HepG2 (cell line): ENCODE measurements at regions of chr11 and their contacts with region 1.

Region 1: GRCh38 chr11:124837491-124837856 is 27.8 kb upstream of the ROBO3 start:
- DNase-seq: peak; percentile 58
- ATAC-seq: peak; percentile 57
- H3K4me3 ChIP-seq: no peak overlapping the region
- H3K27ac ChIP-seq: no peak overlapping the region
- H3K4me1 ChIP-seq: peaks cover 32% of the 10 kb centered on the region
- H3K27me3 ChIP-seq: peaks cover 11 to 55% of the 10 kb centered on the region in 2 experiments
- CTCF ChIP-seq: peak; percentile 71
- EP300 ChIP-seq: no peak
- POLR2A ChIP-seq: no peak
- RAD21 ChIP-seq: no peak

Region 2: GRCh38 chr11:124644426-124645280 is 192.8 kb before region 1 on chr11:
- CTCF ChIA-PET with region 1: interaction called, 17 read pairs
- POLR2A ChIA-PET with region 1: interaction called, 5 read pairs
- in situ Hi-C with region 1: loop called (anchors 5 kb)
- intact Hi-C with region 1: loop called (anchors 1 kb)
- DNase-seq: peak; percentile 64
- ATAC-seq: peak; percentile 95
- H3K4me3 ChIP-seq: peak overlapping the region in 2 of 3 experiments; percentile 46 to 52; a peak in 2 of 6 replicates
- H3K27ac ChIP-seq: no peak overlapping the region
- H3K4me1 ChIP-seq: peaks cover 7% of the 10 kb centered on the region
- H3K27me3 ChIP-seq: no peaks in the 10 kb centered on the region
- CTCF ChIP-seq: peak; percentile 81
- EP300 ChIP-seq: no peak
- POLR2A ChIP-seq: no peak
- RAD21 ChIP-seq: peak; percentile 58; the same call in 1 of the 2 replicates

Region 3: DNA sequence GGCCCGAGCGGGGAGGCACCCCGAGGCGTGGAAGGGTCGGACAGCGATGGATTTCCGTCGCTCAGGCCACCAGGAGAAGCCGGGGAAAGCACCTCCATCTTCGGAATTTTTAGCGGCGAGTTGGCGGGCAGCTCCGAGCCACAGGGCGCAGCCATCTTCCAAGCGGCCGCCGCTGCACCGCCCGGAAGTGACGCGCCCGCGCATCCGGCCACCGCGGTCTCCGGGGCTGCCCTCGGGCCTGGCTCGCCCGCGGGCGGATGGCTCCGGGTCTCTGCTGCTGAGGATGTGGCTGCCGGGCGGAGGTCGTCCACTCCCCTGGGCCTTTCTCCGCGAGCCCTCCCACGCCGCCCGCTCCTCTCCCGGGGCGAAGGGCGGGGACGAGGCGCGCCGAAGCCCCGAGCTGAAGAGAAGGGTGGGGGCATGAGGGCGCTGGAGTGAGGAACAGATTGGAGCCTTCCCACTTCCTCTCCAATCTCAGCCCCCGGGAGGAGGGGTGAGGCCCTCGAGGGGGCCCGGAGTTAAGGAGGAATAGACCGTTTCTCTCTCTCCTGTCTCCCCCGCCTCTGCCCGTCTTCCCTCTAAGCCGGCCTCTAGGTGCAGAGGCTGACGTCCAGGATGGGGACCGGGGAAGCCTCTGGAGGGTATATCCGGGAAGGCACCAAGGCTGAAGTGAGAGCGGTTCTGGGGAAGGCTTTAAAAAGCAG is 37.1 kb before region 1 on chr11 and contains the start of gene MSANTD2:
- CTCF ChIA-PET with region 1: no interaction called
- POLR2A ChIA-PET with region 1: interaction called, 14 read pairs
- in situ Hi-C with region 1: no loop called
- intact Hi-C with region 1: loop called (anchors 2 kb)
- DNase-seq: peak; percentile 46
- ATAC-seq: peak; percentile 98
- H3K4me3 ChIP-seq: peak within 1 kb of the TSS; percentile 94 to 96 (median 96)
- H3K27ac ChIP-seq: peak within 1 kb of the TSS; percentile 88
- H3K4me1 ChIP-seq: peaks cover 46% of the 10 kb centered on the region
- H3K27me3 ChIP-seq: no peaks in the 10 kb centered on the region; a peak in 1 of 5 replicates
- CTCF ChIP-seq: no peak; the same call in 1 of the 2 replicates
- EP300 ChIP-seq: peak in 1 of 2 experiments; percentile 10; a peak in 1 of 4 replicates
- POLR2A ChIP-seq: peak; percentile 83 to 96
- RAD21 ChIP-seq: no peak
- total RNA-seq, gene MSANTD2: 6.8 and 10.1 TPM in 2 replicates